GM12878 (cell line): ENCODE measurements at regions of chr11 and their contacts with region 1.

Region 1: GRCh38 chr11:117205211-117205818 is 6.1 kb downstream of the TAGLN start:
- DNase-seq: no peak
- ATAC-seq: no peak
- H3K4me3 ChIP-seq: no peak overlapping the region
- H3K27ac ChIP-seq: no peak overlapping the region
- H3K4me1 ChIP-seq: no peaks in the 10 kb centered on the region
- H3K27me3 ChIP-seq: no peaks in the 10 kb centered on the region
- CTCF ChIP-seq: no peak
- EP300 ChIP-seq: no peak
- POLR2A ChIP-seq: peak; percentile 39; the same call in 1 of the 2 replicates
- RAD21 ChIP-seq: no peak

Region 2: GRCh38 chr11:117134431-117134830 is 70.9 kb before region 1 on chr11:
- CTCF ChIA-PET with region 1: no interaction called
- POLR2A ChIA-PET with region 1: no interaction called
- RAD21 ChIA-PET with region 1: no interaction called
- SMC1A ChIA-PET with region 1: no interaction called
- in situ Hi-C with region 1: loop called (anchors 5 kb)
- intact Hi-C with region 1: loop called (anchors 5 kb)
- DNase-seq: no peak
- ATAC-seq: no peak
- H3K4me3 ChIP-seq: no peak overlapping the region
- H3K27ac ChIP-seq: no peak overlapping the region
- H3K4me1 ChIP-seq: no peaks in the 10 kb centered on the region
- H3K27me3 ChIP-seq: no peaks in the 10 kb centered on the region
- CTCF ChIP-seq: no peak
- EP300 ChIP-seq: no peak
- POLR2A ChIP-seq: no peak
- RAD21 ChIP-seq: no peak